Body of pancreas (tissue), 4 donors: ENCODE measurements at regions of chr13 and their contacts with region 1.

Region 1: DNA sequence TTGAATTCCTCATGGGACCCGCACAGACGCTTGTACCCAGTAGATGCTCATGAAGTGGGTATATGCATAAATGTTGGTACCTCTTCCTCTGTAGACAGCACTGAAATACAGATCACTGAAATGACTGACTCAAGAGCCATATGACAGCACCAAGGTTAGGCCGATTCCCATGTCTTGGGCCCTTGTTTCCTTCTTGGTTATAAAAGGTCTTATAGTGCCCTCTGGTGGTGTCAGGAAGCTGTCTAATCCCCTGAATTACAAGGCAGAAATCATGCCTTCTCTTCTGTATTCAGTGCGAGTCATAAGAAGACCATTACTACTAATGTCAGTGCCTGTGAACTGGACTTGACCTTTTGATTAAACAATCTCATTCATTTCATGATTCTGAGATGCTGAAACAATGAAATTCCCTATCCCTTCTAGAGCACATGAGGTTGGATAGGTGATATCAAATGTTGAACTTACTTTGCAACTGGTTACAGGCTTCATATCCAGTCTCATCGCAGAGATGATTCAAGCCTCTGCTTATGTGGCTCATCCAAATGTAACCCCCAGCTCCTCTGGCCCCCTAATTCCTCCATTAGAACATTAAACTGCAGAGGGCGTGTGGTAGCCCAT is 59.7 kb downstream of the SPATA13 start:
- DNase-seq: peak; percentile 74 to 89 (median 83)
- ATAC-seq: peak; percentile 65
- H3K4me3 ChIP-seq: no peak overlapping the region
- H3K27ac ChIP-seq: peak overlapping the region; percentile 83 to 94 (median 90)
- H3K4me1 ChIP-seq: peaks cover 100% of the 10 kb centered on the region
- H3K27me3 ChIP-seq: no peaks in the 10 kb centered on the region
- CTCF ChIP-seq: peak; percentile 56 to 94 (median 90)
- POLR2A ChIP-seq: no peak

Region 2: DNA sequence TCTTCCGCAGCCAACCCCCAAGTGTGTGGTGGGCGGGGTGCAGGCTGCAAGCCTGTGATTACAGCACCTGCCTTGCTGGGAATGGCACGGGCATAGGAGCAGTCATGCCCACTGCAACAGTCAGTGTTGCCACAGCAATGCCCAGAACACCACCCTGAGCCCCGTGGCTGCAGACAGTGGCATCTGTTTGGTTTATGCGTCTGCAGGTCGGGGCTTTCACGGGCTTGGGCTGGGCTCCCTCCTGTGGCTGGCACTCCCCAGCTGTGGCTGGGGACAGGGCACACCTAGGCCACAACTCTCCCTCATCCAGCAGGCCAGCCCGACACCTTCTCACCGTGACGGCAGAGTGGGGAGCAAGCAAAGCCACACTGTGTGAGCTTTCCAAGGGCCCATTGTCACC is 207.5 kb before region 1 on chr13:
- intact Hi-C with region 1: loop called (anchors 10 kb)
- DNase-seq: peak in 1 of 4 donors; percentile 8
- ATAC-seq: no peak
- H3K4me3 ChIP-seq: no peak overlapping the region
- H3K27ac ChIP-seq: no peak overlapping the region
- H3K4me1 ChIP-seq: no peaks in the 10 kb centered on the region
- H3K27me3 ChIP-seq: no peaks in the 10 kb centered on the region
- CTCF ChIP-seq: no peak
- POLR2A ChIP-seq: no peak

Region 3: DNA sequence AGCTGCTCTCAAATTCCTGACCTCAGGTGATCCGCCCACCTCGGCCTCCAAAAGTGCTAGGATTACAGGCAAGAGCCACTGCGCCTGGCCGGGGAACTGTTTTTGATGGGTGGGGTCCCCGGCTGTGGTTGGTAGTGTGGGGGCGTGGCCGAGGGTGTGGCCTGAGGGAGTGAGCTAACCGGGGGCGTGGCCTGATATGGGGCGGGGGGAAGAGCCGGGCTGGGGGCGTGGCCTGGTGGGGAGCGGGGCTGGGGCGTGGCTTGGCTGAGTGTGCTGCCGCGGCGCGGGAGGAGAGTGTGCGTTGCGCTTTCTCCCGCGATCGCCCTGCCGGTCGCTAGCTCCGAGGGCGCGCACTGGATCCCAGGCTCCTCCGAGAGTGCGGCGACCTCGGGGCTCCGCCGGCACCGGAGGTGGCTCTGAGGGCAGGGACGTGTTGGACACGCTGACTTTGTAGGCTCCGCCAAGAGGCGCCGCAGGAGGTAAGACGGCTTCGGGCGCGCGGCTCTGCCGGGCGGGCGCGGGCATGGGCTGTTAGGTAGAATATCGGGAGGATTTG is 59.7 kb before region 1 on chr13 and contains the start of gene SPATA13:
- intact Hi-C with region 1: loop called (anchors 5 kb)
- DNase-seq: peak; percentile 95 to 99 (median 98)
- ATAC-seq: peak; percentile 90
- H3K4me3 ChIP-seq: peak within 1 kb of the TSS; percentile 74 to 97
- H3K27ac ChIP-seq: peak within 1 kb of the TSS; percentile 97 to 100 (median 98)
- H3K4me1 ChIP-seq: peaks cover 43% of the 10 kb centered on the region
- H3K27me3 ChIP-seq: no peaks in the 10 kb centered on the region
- CTCF ChIP-seq: peak in 3 of 7 experiments; percentile 7 to 20 (median 14)
- POLR2A ChIP-seq: peak; percentile 95 to 98 (median 97)
- total RNA-seq, gene SPATA13: 83.3 to 359 TPM

Region 4: GRCh38 chr13:24293746-24294145 is 73.6 kb after region 1 on chr13:
- intact Hi-C with region 1: no loop called
- DNase-seq: no peak
- ATAC-seq: no peak
- H3K4me3 ChIP-seq: no peak overlapping the region
- H3K27ac ChIP-seq: no peak overlapping the region
- H3K4me1 ChIP-seq: no peaks in the 10 kb centered on the region
- H3K27me3 ChIP-seq: no peaks in the 10 kb centered on the region
- CTCF ChIP-seq: no peak
- POLR2A ChIP-seq: no peak

Region 5: DNA sequence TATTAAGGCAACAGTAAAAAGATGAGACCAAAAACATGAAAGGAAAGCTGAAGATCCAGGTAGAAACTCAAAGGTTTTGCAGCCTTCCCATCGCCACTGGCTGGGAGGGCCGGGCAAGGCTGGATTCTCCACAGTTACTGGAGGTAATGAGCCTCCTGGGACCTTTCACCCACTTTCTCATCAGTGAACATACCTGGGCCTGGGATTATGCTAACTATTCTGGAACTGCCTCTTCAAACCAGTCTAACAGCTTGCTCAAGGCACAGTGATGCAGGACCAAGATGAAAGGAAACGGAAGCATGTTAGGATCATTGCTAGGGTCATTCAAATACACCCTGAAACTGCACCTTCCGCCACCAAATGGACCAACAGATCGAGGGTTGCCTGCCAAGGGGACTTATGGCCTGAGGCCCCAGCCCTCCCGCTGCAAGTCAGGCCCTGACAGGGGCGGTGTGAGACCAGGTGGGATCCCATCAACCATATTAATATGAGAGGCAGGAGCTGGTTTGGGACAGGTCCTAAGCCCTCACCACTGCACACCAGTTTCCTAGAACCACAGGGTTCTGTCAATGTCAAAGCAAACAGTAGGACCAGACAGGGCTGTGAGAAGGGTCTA is 431.7 kb after region 1 on chr13:
- intact Hi-C with region 1: no loop called
- DNase-seq: no peak
- ATAC-seq: no peak
- H3K4me3 ChIP-seq: no peak overlapping the region
- H3K27ac ChIP-seq: no peak overlapping the region
- H3K4me1 ChIP-seq: peaks cover 4% of the 10 kb centered on the region
- H3K27me3 ChIP-seq: no peaks in the 10 kb centered on the region
- CTCF ChIP-seq: no peak
- POLR2A ChIP-seq: no peak